Sigmoid colon (tissue), 7 donors: ENCODE measurements at regions of chr1 and their contacts with region 1.

Region 1: GRCh38 chr1:178093205-178093957 is 523 bp upstream of the RASAL2 start:
- DNase-seq: peak; percentile 94
- H3K4me3 ChIP-seq: peak overlapping the region; percentile 87 to 96 (median 92)
- H3K27ac ChIP-seq: peak overlapping the region; percentile 84 to 96 (median 95)
- H3K4me1 ChIP-seq: peaks cover 0 to 46% (median 34%) of the 10 kb centered on the region in 4 donors
- H3K27me3 ChIP-seq: no peaks in the 10 kb centered on the region
- CTCF ChIP-seq: no peak
- EP300 ChIP-seq: no peak
- POLR2A ChIP-seq: no peak

Region 2: GRCh38 chr1:177902266-177902665 is 191.1 kb before region 1 on chr1:
- intact Hi-C with region 1: no loop called
- DNase-seq: no peak
- H3K4me3 ChIP-seq: no peak overlapping the region
- H3K27ac ChIP-seq: no peak overlapping the region
- H3K4me1 ChIP-seq: no peaks in the 10 kb centered on the region
- H3K27me3 ChIP-seq: no peaks in the 10 kb centered on the region
- CTCF ChIP-seq: no peak
- EP300 ChIP-seq: no peak
- POLR2A ChIP-seq: no peak

Region 3: GRCh38 chr1:178037503-178038253 is 55.7 kb before region 1 on chr1:
- intact Hi-C with region 1: loop called (anchors 2 kb)
- DNase-seq: peak; percentile 92
- H3K4me3 ChIP-seq: peak overlapping the region; percentile 42 to 84 (median 74)
- H3K27ac ChIP-seq: peak overlapping the region; percentile 62 to 76 (median 71)
- H3K4me1 ChIP-seq: peaks cover 0 to 9% (median 5%) of the 10 kb centered on the region in 4 donors
- H3K27me3 ChIP-seq: no peaks in the 10 kb centered on the region
- CTCF ChIP-seq: peak; percentile 15 to 43 (median 32)
- EP300 ChIP-seq: no peak
- POLR2A ChIP-seq: no peak

Region 4: DNA sequence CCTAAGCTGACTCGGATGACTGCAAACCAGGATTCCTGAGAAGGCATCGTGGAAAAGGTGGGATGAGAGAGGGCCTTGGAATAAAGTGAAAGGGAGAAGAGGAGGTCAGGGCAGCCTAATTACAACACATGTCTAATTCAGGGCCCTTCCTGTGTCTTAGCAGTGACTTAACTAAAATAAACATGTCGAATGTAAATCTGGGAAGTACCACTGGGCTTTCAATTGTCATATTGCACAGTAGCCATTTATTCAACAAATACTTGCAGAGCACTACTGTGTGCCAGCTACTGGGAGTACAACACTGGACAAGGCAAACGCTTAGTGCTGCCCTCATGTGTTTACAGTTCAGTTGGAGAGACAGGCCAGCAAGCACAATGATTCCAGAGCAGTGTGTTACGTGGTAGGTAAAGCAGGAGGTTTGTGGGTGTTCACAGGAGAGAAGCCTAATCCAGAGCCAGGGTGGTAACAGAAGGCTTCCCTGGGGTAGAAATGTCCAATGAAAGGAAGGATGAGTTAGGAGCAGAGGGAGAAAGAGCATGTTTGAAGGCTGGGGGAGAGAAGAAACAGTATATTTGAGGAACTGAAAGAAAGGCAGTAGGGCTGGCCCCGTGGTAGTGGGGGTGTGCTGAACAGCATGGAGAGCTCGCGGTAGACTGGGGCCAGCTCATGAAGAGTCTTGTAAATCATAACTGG is 37.5 kb before region 1 on chr1:
- intact Hi-C with region 1: loop called (anchors 5 kb)
- DNase-seq: no peak
- H3K4me3 ChIP-seq: no peak overlapping the region
- H3K27ac ChIP-seq: peak overlapping the region in 3 of 4 donors; percentile 63 to 75 (median 71)
- H3K4me1 ChIP-seq: peaks cover 0 to 41% (median 33%) of the 10 kb centered on the region in 4 donors
- H3K27me3 ChIP-seq: no peaks in the 10 kb centered on the region
- CTCF ChIP-seq: no peak
- EP300 ChIP-seq: no peak
- POLR2A ChIP-seq: no peak

Region 5: GRCh38 chr1:178282949-178283367 is 189.6 kb after region 1 on chr1:
- intact Hi-C with region 1: loop called (anchors 10 kb)
- DNase-seq: no peak
- H3K4me3 ChIP-seq: no peak overlapping the region
- H3K27ac ChIP-seq: no peak overlapping the region
- H3K4me1 ChIP-seq: peaks cover 0 to 8% (median 0%) of the 10 kb centered on the region in 4 donors
- H3K27me3 ChIP-seq: no peaks in the 10 kb centered on the region
- CTCF ChIP-seq: peak in 3 of 4 experiments; percentile 17 to 32 (median 28)
- EP300 ChIP-seq: no peak
- POLR2A ChIP-seq: no peak

Region 6: GRCh38 chr1:179025125-179025974 is 932.0 kb after region 1 on chr1 and contains the start of gene FAM20B:
- intact Hi-C with region 1: loop called (anchors 10 kb)
- DNase-seq: peak; percentile 97
- H3K4me3 ChIP-seq: peak within 1 kb of the TSS; percentile 78 to 97 (median 94)
- H3K27ac ChIP-seq: peak within 1 kb of the TSS; percentile 93 to 99 (median 98)
- H3K4me1 ChIP-seq: peaks cover 0 to 42% (median 33%) of the 10 kb centered on the region in 4 donors
- H3K27me3 ChIP-seq: no peaks in the 10 kb centered on the region
- CTCF ChIP-seq: no peak
- EP300 ChIP-seq: no peak
- POLR2A ChIP-seq: no peak
- total RNA-seq, gene FAM20B: 36.3 to 51.0 (median 48.3) TPM